ENCODE measurements at regions of chr22 and their contacts with region 1.

Region 1: DNA sequence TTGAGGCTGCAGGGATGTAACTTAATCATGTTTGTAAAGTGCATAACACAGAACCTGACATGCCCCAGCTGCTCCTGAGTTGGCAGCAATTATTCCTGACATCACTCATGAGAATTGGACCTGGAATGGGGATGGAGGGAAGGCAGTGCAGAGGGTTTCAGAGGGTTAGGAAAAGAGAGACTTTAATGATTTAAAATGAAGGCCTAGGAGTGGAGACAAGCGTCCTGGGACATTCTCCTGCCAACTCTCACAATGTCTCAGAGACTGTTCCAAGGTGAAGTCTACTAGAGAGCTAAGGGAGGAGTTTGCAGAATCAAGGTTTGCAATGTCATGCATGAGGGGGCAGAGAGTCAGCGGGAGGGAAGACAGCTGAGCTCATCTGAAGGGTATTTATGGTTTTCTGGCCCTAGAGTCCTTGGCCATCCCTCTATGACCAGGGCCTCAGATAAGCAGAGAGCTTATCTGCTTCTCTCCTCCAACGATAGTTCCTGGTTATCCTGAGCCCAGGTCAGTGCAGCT is 36.9 kb downstream of the GGTLC2 start:
- DNase-seq: peak in 2 of 4 experiments; percentile 59 to 74
- ATAC-seq: peak; percentile 2; the same call in 1 of the 3 replicates
- H3K4me3 ChIP-seq: no peak overlapping the region
- H3K27ac ChIP-seq: no peak overlapping the region
- H3K4me1 ChIP-seq: peaks cover 0 to 6% of the 10 kb centered on the region in 2 experiments; a peak in 3 of 5 replicates
- H3K27me3 ChIP-seq: peaks cover 6 to 15% of the 10 kb centered on the region in 2 experiments; a peak in 3 of 5 replicates
- CTCF ChIP-seq: no peak
- EP300 ChIP-seq: no peak
- POLR2A ChIP-seq: no peak
- RAD21 ChIP-seq: no peak

Region 2: GRCh38 chr22:22692707-22693530 is 11.6 kb after region 1 on chr22:
- CTCF ChIA-PET with region 1: interaction called, 5 read pairs
- POLR2A ChIA-PET with region 1: interaction called, 20 read pairs
- in situ Hi-C with region 1: no loop called
- intact Hi-C with region 1: loop called (anchors 2 kb)
- DNase-seq: peak; percentile 96 to 100 (median 99)
- ATAC-seq: peak; percentile 94
- H3K4me3 ChIP-seq: no peak overlapping the region
- H3K27ac ChIP-seq: no peak overlapping the region
- H3K4me1 ChIP-seq: no peaks in the 10 kb centered on the region
- H3K27me3 ChIP-seq: peaks cover 0 to 27% of the 10 kb centered on the region in 2 experiments; a peak in 2 of 5 replicates
- CTCF ChIP-seq: no peak
- EP300 ChIP-seq: no peak
- POLR2A ChIP-seq: no peak
- RAD21 ChIP-seq: no peak

Region 3: DNA sequence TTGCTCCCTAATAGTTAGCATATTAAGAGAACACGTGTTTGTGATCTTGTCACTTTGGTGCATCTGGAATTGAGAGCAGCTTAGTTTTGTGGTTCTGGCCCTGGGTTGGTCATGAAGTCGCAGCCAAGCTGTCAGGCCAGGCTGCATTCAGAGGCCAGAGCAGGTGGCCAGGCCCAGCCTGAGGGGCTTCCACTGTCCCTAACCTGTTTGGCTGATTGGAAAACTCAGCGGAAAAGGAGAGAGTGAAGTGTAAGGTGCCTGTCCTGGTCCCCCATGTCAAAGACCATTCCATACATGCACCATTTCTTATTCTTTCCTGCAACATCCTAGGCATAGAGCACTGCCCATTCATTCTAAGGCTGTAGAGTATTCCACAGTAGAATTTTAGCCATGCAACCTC is 94.8 kb after region 1 on chr22:
- CTCF ChIA-PET with region 1: no interaction called
- POLR2A ChIA-PET with region 1: no interaction called
- in situ Hi-C with region 1: no loop called
- intact Hi-C with region 1: no loop called
- DNase-seq: no peak
- ATAC-seq: 0 out of 3 replicates have a peak, but pooled peaks have one; percentile 5
- H3K4me3 ChIP-seq: no peak overlapping the region
- H3K27ac ChIP-seq: no peak overlapping the region
- H3K4me1 ChIP-seq: no peaks in the 10 kb centered on the region
- H3K27me3 ChIP-seq: peaks cover 5 to 31% of the 10 kb centered on the region in 2 experiments; a peak in 4 of 5 replicates
- CTCF ChIP-seq: no peak
- EP300 ChIP-seq: no peak
- POLR2A ChIP-seq: no peak
- RAD21 ChIP-seq: no peak

Region 4: DNA sequence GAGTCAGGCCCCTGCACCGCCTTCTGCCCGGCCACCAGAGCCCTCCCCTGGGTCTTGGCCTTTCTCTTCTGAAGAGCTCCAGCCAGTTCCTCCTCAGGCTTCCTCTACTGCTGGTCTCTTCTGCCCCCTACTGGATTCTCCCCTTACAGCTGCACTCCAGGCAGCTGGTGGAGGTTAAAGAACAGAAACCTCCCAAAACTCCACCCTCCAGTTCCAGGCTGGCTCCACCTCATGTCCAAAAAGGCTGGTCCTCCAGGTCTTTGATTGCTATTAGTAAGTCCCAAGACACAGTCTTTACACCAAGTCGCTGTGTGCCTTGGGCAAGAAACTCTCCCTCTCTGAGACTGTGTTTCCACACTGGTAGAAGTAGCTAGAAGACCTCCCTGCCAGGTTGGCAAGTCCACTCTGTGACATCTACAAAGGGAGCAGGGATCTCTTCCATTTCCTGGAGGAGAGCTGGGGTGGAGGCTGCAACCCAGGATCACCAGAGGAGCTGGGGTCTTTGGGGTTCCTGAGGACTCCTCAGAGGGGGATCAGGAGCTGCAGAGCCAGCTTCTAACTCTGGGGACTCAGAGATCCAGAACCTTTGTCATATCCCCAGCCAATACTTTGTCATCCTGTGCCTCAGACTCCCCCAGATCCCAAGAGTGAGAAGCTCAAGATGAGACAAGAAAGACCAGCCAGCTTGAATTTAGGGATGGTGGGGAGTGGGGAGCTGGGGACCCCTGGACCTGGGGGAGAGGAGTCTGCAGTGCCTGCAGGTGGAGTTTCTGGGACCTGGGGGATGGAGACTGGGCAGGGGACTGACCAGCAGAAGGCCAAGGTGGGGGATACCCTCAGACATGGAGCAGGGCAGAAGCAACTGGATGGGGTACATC is 203.0 kb after region 1 on chr22:
- CTCF ChIA-PET with region 1: no interaction called
- POLR2A ChIA-PET with region 1: no interaction called
- in situ Hi-C with region 1: no loop called
- intact Hi-C with region 1: no loop called
- DNase-seq: peak; percentile 57 to 100 (median 78)
- ATAC-seq: peak; percentile 94
- H3K4me3 ChIP-seq: no peak overlapping the region
- H3K27ac ChIP-seq: no peak overlapping the region
- H3K4me1 ChIP-seq: peaks cover 0 to 9% of the 10 kb centered on the region in 2 experiments; a peak in 1 of 5 replicates
- H3K27me3 ChIP-seq: peaks cover 0 to 46% of the 10 kb centered on the region in 2 experiments; a peak in 2 of 5 replicates
- CTCF ChIP-seq: no peak
- EP300 ChIP-seq: no peak
- POLR2A ChIP-seq: no peak
- RAD21 ChIP-seq: no peak

Region 5: DNA sequence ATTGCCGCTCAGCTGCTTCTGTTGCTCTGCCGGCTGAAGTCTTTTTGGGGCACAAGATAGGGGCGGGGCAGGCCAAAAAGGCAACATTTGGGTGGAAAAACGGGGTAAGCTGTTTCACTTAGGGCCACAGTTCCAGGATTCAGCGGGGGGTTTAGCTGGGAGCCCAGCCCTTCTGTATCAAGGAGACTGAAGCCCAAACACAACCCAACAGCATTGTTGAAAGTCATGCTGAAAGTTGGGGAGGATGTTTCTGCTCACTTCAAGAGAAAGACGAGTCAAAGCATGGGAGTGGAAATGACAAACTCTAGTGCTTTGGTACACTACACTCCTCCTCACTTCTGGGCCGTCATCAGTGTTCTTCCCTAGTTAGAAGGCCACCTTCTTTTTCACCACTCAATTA is 333.0 kb after region 1 on chr22:
- CTCF ChIA-PET with region 1: no interaction called
- POLR2A ChIA-PET with region 1: no interaction called
- in situ Hi-C with region 1: no loop called
- intact Hi-C with region 1: no loop called
- DNase-seq: peak in 2 of 4 experiments; percentile 43 to 45
- ATAC-seq: no peak
- H3K4me3 ChIP-seq: no peak overlapping the region
- H3K27ac ChIP-seq: no peak overlapping the region
- H3K4me1 ChIP-seq: peaks cover 0 to 9% of the 10 kb centered on the region in 2 experiments; a peak in 2 of 5 replicates
- H3K27me3 ChIP-seq: peaks cover 56 to 66% of the 10 kb centered on the region in 2 experiments
- CTCF ChIP-seq: no peak
- EP300 ChIP-seq: no peak
- POLR2A ChIP-seq: no peak
- RAD21 ChIP-seq: no peak